ENCODE measurements at regions of chr11 and their contacts with region 1.

Region 1: GRCh38 chr11:67071420-67072284 is 15.0 kb downstream of the RHOD start:
- DNase-seq: peak; percentile 42 to 81 (median 58)
- ATAC-seq: peak; percentile 93
- H3K4me3 ChIP-seq: peak overlapping the region; percentile 43
- H3K4me3 Mint-ChIP-seq: peak overlapping the region in 9 of 10 donors; percentile 50 to 74 (median 63)
- H3K27ac ChIP-seq: no peak overlapping the region
- H3K27ac Mint-ChIP-seq: no peak overlapping the region
- H3K4me1 ChIP-seq: no peaks in the 10 kb centered on the region
- H3K4me1 Mint-ChIP-seq: peaks cover 0 to 11% (median 4%) of the 10 kb centered on the region in 7 donors
- H3K27me3 ChIP-seq: no peaks in the 10 kb centered on the region
- H3K27me3 Mint-ChIP-seq: peaks cover 0 to 15% (median 5%) of the 10 kb centered on the region in 5 donors

Region 2: DNA sequence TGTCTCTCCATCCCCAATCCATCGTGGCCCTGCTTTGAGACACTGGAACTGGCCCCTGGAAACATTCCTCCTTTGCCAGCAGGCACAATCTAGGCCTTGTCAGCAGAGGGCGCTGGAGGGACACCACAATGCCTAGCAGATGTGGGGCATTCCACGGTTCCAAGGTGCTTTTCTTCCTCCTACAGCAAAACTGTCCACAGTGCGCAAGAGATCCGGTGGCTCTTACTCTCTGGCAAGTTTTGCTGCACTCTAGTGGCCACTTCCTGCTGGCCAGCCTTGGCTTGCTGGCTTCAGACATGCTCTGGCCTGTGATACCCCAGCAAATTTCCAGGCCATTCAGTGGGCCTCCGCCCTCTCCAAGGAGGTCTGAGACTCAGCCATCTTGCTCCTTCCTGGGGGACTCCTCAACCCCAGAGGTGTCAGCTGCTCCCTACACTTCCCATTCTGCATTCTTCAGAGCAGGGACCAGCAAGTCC is 376.9 kb before region 1 on chr11:
- CTCF ChIA-PET with region 1: interaction called, 6 read pairs
- POLR2A ChIA-PET with region 1: no interaction called
- intact Hi-C with region 1: loop called in 1 of 2 experiments (anchors 1 kb)
- DNase-seq: peak; percentile 56 to 83 (median 77)
- ATAC-seq: peak; percentile 97
- H3K4me3 ChIP-seq: no peak overlapping the region
- H3K4me3 Mint-ChIP-seq: no peak overlapping the region
- H3K27ac ChIP-seq: no peak overlapping the region
- H3K27ac Mint-ChIP-seq: no peak overlapping the region
- H3K4me1 ChIP-seq: no peaks in the 10 kb centered on the region
- H3K4me1 Mint-ChIP-seq: peaks cover 0 to 5% (median 0%) of the 10 kb centered on the region in 7 donors
- H3K27me3 ChIP-seq: no peaks in the 10 kb centered on the region
- H3K27me3 Mint-ChIP-seq: peaks cover 0 to 4% (median 0%) of the 10 kb centered on the region in 5 donors

Region 3: GRCh38 chr11:66958232-66958955 is 113.3 kb before region 1 on chr11 and contains the start of gene PC:
- CTCF ChIA-PET with region 1: no interaction called
- POLR2A ChIA-PET with region 1: no interaction called
- intact Hi-C with region 1: loop called in 1 of 2 experiments (anchors 1 kb)
- DNase-seq: peak; percentile 83 to 98 (median 96)
- ATAC-seq: peak; percentile 98
- H3K4me3 ChIP-seq: peak within 1 kb of the TSS; percentile 81
- H3K4me3 Mint-ChIP-seq: peak within 1 kb of the TSS; percentile 82 to 95 (median 91)
- H3K27ac ChIP-seq: peak within 1 kb of the TSS; percentile 64
- H3K27ac Mint-ChIP-seq: peak within 1 kb of the TSS; percentile 76 to 93 (median 87)
- H3K4me1 ChIP-seq: peaks cover 8 to 19% of the 10 kb centered on the region in 2 donors
- H3K4me1 Mint-ChIP-seq: peaks cover 16 to 31% (median 27%) of the 10 kb centered on the region in 7 donors
- H3K27me3 ChIP-seq: no peaks in the 10 kb centered on the region
- H3K27me3 Mint-ChIP-seq: peaks cover 0 to 6% (median 0%) of the 10 kb centered on the region in 5 donors
- total RNA-seq, gene PC: 8.4 to 11.2 (median 10.0) TPM

Region 4: GRCh38 chr11:67022328-67022927 is 49.2 kb before region 1 on chr11:
- CTCF ChIA-PET with region 1: interaction called, 4 read pairs
- POLR2A ChIA-PET with region 1: no interaction called
- intact Hi-C with region 1: loop called in 1 of 2 experiments (anchors 5 kb)
- DNase-seq: no peak
- ATAC-seq: no peak
- H3K4me3 ChIP-seq: no peak overlapping the region
- H3K4me3 Mint-ChIP-seq: peak overlapping the region in 9 of 10 donors; percentile 23 to 91 (median 68)
- H3K27ac ChIP-seq: no peak overlapping the region
- H3K27ac Mint-ChIP-seq: no peak overlapping the region
- H3K4me1 ChIP-seq: peaks cover 24 to 31% of the 10 kb centered on the region in 2 donors
- H3K4me1 Mint-ChIP-seq: peaks cover 4 to 32% (median 24%) of the 10 kb centered on the region in 7 donors
- H3K27me3 ChIP-seq: peaks cover 9 to 18% of the 10 kb centered on the region in 2 donors
- H3K27me3 Mint-ChIP-seq: peaks cover 16 to 65% (median 35%) of the 10 kb centered on the region in 5 donors

Region 5: GRCh38 chr11:67053896-67054842 is 17.5 kb before region 1 on chr11:
- CTCF ChIA-PET with region 1: interaction called, 4 read pairs
- POLR2A ChIA-PET with region 1: no interaction called
- intact Hi-C with region 1: loop called (anchors 1 kb)
- DNase-seq: peak in 7 of 9 donors; percentile 20 to 47 (median 35)
- ATAC-seq: peak; percentile 71
- H3K4me3 ChIP-seq: no peak overlapping the region
- H3K4me3 Mint-ChIP-seq: peak overlapping the region in 1 of 10 donors; percentile 35
- H3K27ac ChIP-seq: no peak overlapping the region
- H3K27ac Mint-ChIP-seq: peak overlapping the region in 1 of 9 donors; percentile 61
- H3K4me1 ChIP-seq: peaks cover 0 to 6% of the 10 kb centered on the region in 2 donors
- H3K4me1 Mint-ChIP-seq: peaks cover 5 to 20% (median 13%) of the 10 kb centered on the region in 7 donors
- H3K27me3 ChIP-seq: no peaks in the 10 kb centered on the region
- H3K27me3 Mint-ChIP-seq: peaks cover 8 to 24% (median 21%) of the 10 kb centered on the region in 5 donors

Region 6: GRCh38 chr11:67082035-67082791 is 10.6 kb after region 1 on chr11:
- CTCF ChIA-PET with region 1: interaction called, 15 read pairs
- POLR2A ChIA-PET with region 1: no interaction called
- intact Hi-C with region 1: no loop called
- DNase-seq: peak in 3 of 9 donors; percentile 5 to 13 (median 11)
- ATAC-seq: no peak
- H3K4me3 ChIP-seq: no peak overlapping the region
- H3K4me3 Mint-ChIP-seq: peak overlapping the region; percentile 12 to 70 (median 60)
- H3K27ac ChIP-seq: no peak overlapping the region
- H3K27ac Mint-ChIP-seq: peak overlapping the region in 3 of 9 donors; percentile 15 to 72 (median 17)
- H3K4me1 ChIP-seq: peaks cover 7 to 10% of the 10 kb centered on the region in 2 donors
- H3K4me1 Mint-ChIP-seq: peaks cover 5 to 22% (median 15%) of the 10 kb centered on the region in 7 donors
- H3K27me3 ChIP-seq: no peaks in the 10 kb centered on the region
- H3K27me3 Mint-ChIP-seq: peaks cover 0 to 5% (median 0%) of the 10 kb centered on the region in 5 donors

Region 7: DNA sequence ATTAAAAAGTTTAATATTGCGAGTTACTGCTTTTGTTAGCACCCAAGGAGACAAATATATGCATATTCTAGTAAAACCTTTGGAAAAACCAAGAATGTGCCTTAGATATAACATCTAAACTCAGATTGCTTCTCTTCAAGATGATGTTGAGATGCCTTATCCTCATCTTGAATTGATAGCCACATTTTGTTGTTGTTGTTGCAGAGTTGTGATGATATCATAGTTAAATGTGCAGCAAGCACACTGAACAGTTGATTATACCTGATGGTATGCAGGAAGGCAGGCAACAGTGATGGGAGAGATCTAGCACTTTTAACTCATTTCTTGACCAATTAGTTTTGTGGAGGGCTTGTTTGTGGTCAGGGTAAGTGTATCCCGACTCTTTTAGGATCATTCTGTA is 95.4 kb after region 1 on chr11:
- CTCF ChIA-PET with region 1: interaction called, 11 read pairs
- POLR2A ChIA-PET with region 1: no interaction called
- intact Hi-C with region 1: no loop called
- DNase-seq: no peak
- ATAC-seq: no peak
- H3K4me3 ChIP-seq: no peak overlapping the region
- H3K4me3 Mint-ChIP-seq: no peak overlapping the region
- H3K27ac ChIP-seq: peak overlapping the region; percentile 25
- H3K27ac Mint-ChIP-seq: peak overlapping the region in 4 of 9 donors; percentile 12 to 63 (median 32)
- H3K4me1 ChIP-seq: peaks cover 0 to 3% of the 10 kb centered on the region in 2 donors
- H3K4me1 Mint-ChIP-seq: peaks cover 20 to 66% (median 54%) of the 10 kb centered on the region in 7 donors
- H3K27me3 ChIP-seq: no peaks in the 10 kb centered on the region
- H3K27me3 Mint-ChIP-seq: no peaks in the 10 kb centered on the region

Region 8: DNA sequence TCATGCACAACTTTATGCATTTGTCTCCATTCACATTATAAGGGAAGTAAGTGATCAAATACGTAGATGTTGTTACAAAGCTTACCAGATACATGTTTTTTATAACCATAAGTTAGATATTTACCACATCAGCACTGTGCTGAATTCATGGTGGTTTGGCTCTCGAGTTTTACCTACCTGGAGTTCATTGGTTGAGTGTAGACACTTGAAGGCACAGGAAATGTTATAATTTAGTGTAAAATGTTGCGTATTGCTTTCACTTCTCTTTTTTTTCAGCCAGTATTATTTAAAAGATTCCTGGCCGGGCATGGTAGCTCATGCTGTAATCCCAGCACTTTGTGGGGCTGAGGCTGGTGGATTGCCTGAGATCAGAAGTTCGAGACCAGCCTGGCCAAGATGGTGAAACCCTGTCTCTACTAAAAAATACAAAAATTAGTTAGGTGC is 141.5 kb after region 1 on chr11:
- CTCF ChIA-PET with region 1: no interaction called
- POLR2A ChIA-PET with region 1: no interaction called
- intact Hi-C with region 1: no loop called
- DNase-seq: peak in 3 of 9 donors; percentile 6 to 23 (median 21)
- ATAC-seq: peak; percentile 66
- H3K4me3 ChIP-seq: no peak overlapping the region
- H3K4me3 Mint-ChIP-seq: peak overlapping the region in 1 of 10 donors; percentile 14
- H3K27ac ChIP-seq: no peak overlapping the region
- H3K27ac Mint-ChIP-seq: peak overlapping the region in 7 of 9 donors; percentile 38 to 85 (median 69)
- H3K4me1 ChIP-seq: no peaks in the 10 kb centered on the region
- H3K4me1 Mint-ChIP-seq: peaks cover 5 to 18% (median 16%) of the 10 kb centered on the region in 7 donors
- H3K27me3 ChIP-seq: no peaks in the 10 kb centered on the region
- H3K27me3 Mint-ChIP-seq: no peaks in the 10 kb centered on the region

Measured in naive thymus-derived CD4-positive, alpha-beta T cell (primary cell).